ENCODE measurements at regions of chr5 and their contacts with region 1.

Region 1: GRCh38 chr5:135729321-135729786 is 105.1 kb upstream of the SLC25A48 start:
- DNase-seq: no peak
- ATAC-seq: peak in 1 of 2 experiments; percentile 62; a peak in 3 of 6 replicates
- H3K4me3 ChIP-seq: no peak overlapping the region
- H3K27ac ChIP-seq: no peak overlapping the region
- H3K4me1 ChIP-seq: no peaks in the 10 kb centered on the region
- CTCF ChIP-seq: peak; percentile 36; the same call in 2 of the 3 replicates
- EP300 ChIP-seq: no peak
- POLR2A ChIP-seq: no peak
- RAD21 ChIP-seq: peak; percentile 44 to 47; a peak in 4 of 5 replicates

Region 2: DNA sequence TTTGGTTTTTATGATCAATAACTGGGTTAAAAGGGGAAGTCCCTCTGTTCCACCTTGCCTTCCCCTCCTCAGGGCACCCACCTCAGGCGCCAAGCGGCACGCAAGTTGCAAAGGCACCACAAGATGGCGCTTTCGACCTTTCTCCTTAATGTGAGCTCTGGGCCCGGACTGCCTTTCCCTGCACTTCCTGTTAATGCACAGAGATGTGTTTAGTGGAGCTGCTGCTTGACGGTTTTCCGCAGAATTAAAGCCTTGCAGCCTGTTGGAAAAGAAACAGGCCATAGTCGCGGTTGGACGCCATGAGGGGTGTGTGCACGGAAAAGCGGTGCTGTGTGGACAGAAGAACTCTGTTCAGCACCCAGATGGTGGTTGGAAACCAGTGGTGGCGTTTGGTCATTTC is 168.5 kb before region 1 on chr5:
- CTCF ChIA-PET with region 1: interaction called, 20 read pairs
- POLR2A ChIA-PET with region 1: no interaction called
- DNase-seq: peak; percentile 76 to 86
- ATAC-seq: peak; percentile 93 to 98
- H3K4me3 ChIP-seq: no peak overlapping the region
- H3K27ac ChIP-seq: no peak overlapping the region
- H3K4me1 ChIP-seq: no peaks in the 10 kb centered on the region
- CTCF ChIP-seq: peak; percentile 84
- EP300 ChIP-seq: no peak
- POLR2A ChIP-seq: no peak
- RAD21 ChIP-seq: peak; percentile 80 to 82

Region 3: DNA sequence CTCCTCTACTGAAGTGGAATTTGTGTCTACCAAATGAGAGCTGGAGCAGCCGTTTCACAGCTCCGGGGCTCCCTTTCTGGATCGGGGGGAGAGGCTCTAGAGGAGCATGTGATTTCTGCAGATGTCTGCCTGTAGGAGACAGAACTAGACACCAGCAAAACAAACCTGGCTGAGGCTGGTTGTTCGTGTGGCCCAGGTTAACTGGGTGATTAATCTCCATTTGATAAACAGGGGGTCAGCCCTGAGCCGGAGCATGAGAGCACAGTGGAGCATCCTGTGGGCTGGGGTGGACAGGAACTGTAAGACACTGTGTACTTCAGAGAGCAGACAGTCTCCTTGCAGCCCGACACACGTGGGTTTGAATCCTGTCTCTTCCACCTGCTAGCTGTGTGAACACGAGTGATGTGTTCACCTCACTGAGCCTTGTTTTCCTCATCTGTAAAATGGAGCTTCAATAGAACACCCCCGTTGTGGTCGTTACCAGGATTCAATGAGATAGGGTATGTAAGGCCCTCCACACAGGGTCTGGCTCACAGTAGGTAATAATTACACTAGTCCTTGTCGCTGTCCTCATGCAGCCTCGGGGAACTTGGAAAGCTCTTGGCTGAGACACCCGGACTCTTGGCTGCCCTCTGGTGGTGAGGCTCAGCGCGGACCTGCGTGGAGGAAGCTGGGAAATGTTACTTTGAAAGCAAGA is 163.5 kb before region 1 on chr5:
- CTCF ChIA-PET with region 1: interaction called, 20 read pairs
- POLR2A ChIA-PET with region 1: no interaction called
- DNase-seq: peak; percentile 64 to 69
- ATAC-seq: peak; percentile 65 to 86; a peak in 5 of 6 replicates
- H3K4me3 ChIP-seq: no peak overlapping the region
- H3K27ac ChIP-seq: no peak overlapping the region
- H3K4me1 ChIP-seq: no peaks in the 10 kb centered on the region
- CTCF ChIP-seq: peak; percentile 85
- EP300 ChIP-seq: no peak
- POLR2A ChIP-seq: no peak
- RAD21 ChIP-seq: peak; percentile 53 to 57

Region 4: GRCh38 chr5:135810188-135810943 is 81.0 kb after region 1 on chr5:
- CTCF ChIA-PET with region 1: no interaction called
- POLR2A ChIA-PET with region 1: no interaction called
- DNase-seq: no peak
- ATAC-seq: no peak
- H3K4me3 ChIP-seq: no peak overlapping the region
- H3K27ac ChIP-seq: no peak overlapping the region
- H3K4me1 ChIP-seq: no peaks in the 10 kb centered on the region
- CTCF ChIP-seq: no peak
- EP300 ChIP-seq: no peak
- POLR2A ChIP-seq: no peak
- RAD21 ChIP-seq: no peak